Breast epithelium (tissue), 4 donors: ENCODE measurements at regions of chr7 and their contacts with region 1.

Region 1: GRCh38 chr7:10106609-10107008 is 867.1 kb upstream of the PHF14 start:
- DNase-seq: no peak
- H3K4me3 ChIP-seq: no peak overlapping the region
- H3K27ac ChIP-seq: no peak overlapping the region
- H3K4me1 ChIP-seq: no peaks in the 10 kb centered on the region
- H3K27me3 ChIP-seq: no peaks in the 10 kb centered on the region
- CTCF ChIP-seq: no peak
- POLR2A ChIP-seq: no peak

Region 2: DNA sequence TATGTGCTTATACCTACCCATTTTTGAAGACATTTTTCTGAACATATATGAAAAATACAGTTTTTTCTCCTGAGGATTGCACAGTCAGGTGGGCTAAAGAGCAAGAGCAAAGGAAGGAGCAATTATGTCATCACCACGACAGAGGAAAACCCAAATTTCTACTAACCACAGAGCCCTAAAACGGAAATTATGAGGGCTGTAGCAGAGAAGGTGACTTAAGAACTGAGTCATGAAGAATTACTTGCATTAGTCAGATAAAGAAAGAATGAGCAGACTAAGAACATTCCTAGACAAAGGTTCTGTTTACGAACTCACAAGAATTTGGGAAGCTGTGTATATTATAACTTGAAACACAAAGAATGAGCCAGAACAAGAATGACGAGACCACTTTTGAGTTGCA is 698.8 kb before region 1 on chr7:
- intact Hi-C with region 1: loop called (anchors 5 kb)
- DNase-seq: no peak
- H3K4me3 ChIP-seq: no peak overlapping the region
- H3K27ac ChIP-seq: no peak overlapping the region
- H3K4me1 ChIP-seq: no peaks in the 10 kb centered on the region
- H3K27me3 ChIP-seq: no peaks in the 10 kb centered on the region
- CTCF ChIP-seq: no peak
- POLR2A ChIP-seq: no peak